Activated CD8-positive, alpha-beta T cell treated with anti-CD3 and anti-CD28 coated beads for 36 hours (primary cell): ENCODE measurements at regions of chr6 and their contacts with region 1.

Region 1: GRCh38 chr6:137832110-137832509 is 34.9 kb upstream of the TNFAIP3 start:
- DNase-seq: no peak
- ATAC-seq: no peak
- H3K4me3 Mint-ChIP-seq: no peak overlapping the region
- H3K27ac Mint-ChIP-seq: peak overlapping the region; percentile 36
- H3K4me1 Mint-ChIP-seq: peaks cover 55% of the 10 kb centered on the region
- H3K27me3 Mint-ChIP-seq: no peaks in the 10 kb centered on the region
- CTCF ChIP-seq: no peak

Region 2: GRCh38 chr6:137791281-137792159 is 40.6 kb before region 1 on chr6:
- CTCF ChIA-PET with region 1: no interaction called
- POLR2A ChIA-PET with region 1: interaction called, 5 read pairs
- intact Hi-C with region 1: loop called (anchors 5 kb)
- DNase-seq: no peak
- ATAC-seq: peak; percentile 13
- H3K4me3 Mint-ChIP-seq: peak overlapping the region; percentile 47
- H3K27ac Mint-ChIP-seq: peak overlapping the region; percentile 56
- H3K4me1 Mint-ChIP-seq: peaks cover 54% of the 10 kb centered on the region
- H3K27me3 Mint-ChIP-seq: no peaks in the 10 kb centered on the region
- CTCF ChIP-seq: no peak

Region 3: DNA sequence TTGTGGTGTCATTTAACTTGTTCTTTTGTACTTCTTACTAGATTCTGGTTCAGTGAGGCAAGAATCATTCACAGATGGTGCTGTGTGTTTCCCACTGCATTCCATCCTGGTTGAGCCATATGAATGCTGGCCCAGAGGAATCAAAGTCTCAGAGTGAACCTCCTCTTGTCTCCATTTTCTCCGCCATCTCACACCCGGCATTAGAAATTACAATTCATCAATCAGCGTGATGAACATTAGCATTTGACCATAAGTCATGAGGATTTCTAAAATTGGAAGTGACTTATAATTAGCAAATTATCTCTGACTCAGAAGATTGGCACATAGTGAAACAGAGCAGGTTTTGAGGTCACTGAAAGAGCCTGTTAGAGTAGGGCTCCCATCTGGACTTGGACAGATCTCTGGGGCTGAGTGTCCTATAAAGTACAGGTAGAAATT is 60.2 kb after region 1 on chr6:
- CTCF ChIA-PET with region 1: no interaction called
- POLR2A ChIA-PET with region 1: no interaction called
- intact Hi-C with region 1: no loop called
- DNase-seq: no peak
- ATAC-seq: no peak
- H3K4me3 Mint-ChIP-seq: no peak overlapping the region
- H3K27ac Mint-ChIP-seq: no peak overlapping the region
- H3K4me1 Mint-ChIP-seq: peaks cover 22% of the 10 kb centered on the region
- H3K27me3 Mint-ChIP-seq: no peaks in the 10 kb centered on the region
- CTCF ChIP-seq: no peak

Region 4: GRCh38 chr6:137903933-137904821 is 72.1 kb after region 1 on chr6:
- CTCF ChIA-PET with region 1: no interaction called
- POLR2A ChIA-PET with region 1: no interaction called
- intact Hi-C with region 1: no loop called
- DNase-seq: peak; percentile 78
- ATAC-seq: peak; percentile 67
- H3K4me3 Mint-ChIP-seq: peak overlapping the region; percentile 67
- H3K27ac Mint-ChIP-seq: peak overlapping the region; percentile 99
- H3K4me1 Mint-ChIP-seq: peaks cover 57% of the 10 kb centered on the region
- H3K27me3 Mint-ChIP-seq: no peaks in the 10 kb centered on the region
- CTCF ChIP-seq: no peak